ENCODE measurements at regions of chr12 and their contacts with region 1.

Region 1: GRCh38 chr12:51424662-51425438 is at the start of gene SLC4A8:
- DNase-seq: peak; percentile 75
- ATAC-seq: peak; percentile 92
- H3K4me3 Mint-ChIP-seq: peak within 1 kb of the TSS; percentile 83
- H3K27ac Mint-ChIP-seq: peak within 1 kb of the TSS; percentile 25
- H3K4me1 Mint-ChIP-seq: peaks cover 16% of the 10 kb centered on the region
- H3K27me3 Mint-ChIP-seq: no peaks in the 10 kb centered on the region
- CTCF ChIP-seq: no peak
- total RNA-seq, gene SLC4A8: 5.2 and 5.8 TPM in 2 replicates

Region 2: DNA sequence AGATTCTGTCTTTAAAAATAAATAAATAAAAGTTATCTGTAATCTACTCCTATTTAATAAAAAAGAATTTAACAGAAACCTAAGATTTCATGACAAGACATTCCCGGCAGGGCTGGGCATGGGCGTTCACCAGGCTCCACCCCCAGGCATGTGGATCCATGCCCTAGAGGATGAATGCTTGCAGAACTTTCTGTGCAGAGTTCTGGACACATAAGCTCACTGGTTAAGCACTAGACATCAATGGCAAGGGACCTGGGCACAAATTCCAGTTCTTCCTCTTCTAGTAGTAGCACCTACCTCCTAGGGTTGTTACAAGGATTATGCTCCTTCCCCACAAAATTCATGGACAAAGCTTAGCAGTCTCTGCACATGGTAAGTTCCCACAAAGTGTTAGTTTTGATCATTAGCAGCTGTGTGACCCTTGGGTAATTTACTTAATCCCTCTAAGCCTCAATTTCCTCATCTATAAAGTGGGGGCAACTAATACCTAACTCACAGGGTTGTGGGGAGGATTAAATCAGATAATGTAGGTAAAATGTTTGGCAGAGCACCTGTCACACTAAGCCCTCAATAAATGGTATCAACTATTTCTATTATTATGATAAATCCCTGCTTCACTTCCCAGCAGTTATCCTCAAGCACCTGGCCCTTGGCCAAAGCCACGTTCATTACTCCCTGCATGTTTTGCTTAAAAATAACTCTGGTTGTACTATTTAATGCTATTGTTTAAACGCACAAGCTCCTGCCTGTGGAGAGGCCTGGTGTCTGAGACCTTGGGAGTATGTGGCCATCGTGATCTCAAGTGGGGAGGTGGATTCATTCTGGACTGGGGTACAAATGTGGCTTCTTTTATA is 43.4 kb before region 1 on chr12:
- CTCF ChIA-PET with region 1: no interaction called
- POLR2A ChIA-PET with region 1: no interaction called
- intact Hi-C with region 1: no loop called
- DNase-seq: no peak
- ATAC-seq: no peak
- H3K4me3 Mint-ChIP-seq: no peak overlapping the region
- H3K27ac Mint-ChIP-seq: no peak overlapping the region
- H3K4me1 Mint-ChIP-seq: peaks cover 33% of the 10 kb centered on the region
- H3K27me3 Mint-ChIP-seq: no peaks in the 10 kb centered on the region
- CTCF ChIP-seq: no peak

Region 3: DNA sequence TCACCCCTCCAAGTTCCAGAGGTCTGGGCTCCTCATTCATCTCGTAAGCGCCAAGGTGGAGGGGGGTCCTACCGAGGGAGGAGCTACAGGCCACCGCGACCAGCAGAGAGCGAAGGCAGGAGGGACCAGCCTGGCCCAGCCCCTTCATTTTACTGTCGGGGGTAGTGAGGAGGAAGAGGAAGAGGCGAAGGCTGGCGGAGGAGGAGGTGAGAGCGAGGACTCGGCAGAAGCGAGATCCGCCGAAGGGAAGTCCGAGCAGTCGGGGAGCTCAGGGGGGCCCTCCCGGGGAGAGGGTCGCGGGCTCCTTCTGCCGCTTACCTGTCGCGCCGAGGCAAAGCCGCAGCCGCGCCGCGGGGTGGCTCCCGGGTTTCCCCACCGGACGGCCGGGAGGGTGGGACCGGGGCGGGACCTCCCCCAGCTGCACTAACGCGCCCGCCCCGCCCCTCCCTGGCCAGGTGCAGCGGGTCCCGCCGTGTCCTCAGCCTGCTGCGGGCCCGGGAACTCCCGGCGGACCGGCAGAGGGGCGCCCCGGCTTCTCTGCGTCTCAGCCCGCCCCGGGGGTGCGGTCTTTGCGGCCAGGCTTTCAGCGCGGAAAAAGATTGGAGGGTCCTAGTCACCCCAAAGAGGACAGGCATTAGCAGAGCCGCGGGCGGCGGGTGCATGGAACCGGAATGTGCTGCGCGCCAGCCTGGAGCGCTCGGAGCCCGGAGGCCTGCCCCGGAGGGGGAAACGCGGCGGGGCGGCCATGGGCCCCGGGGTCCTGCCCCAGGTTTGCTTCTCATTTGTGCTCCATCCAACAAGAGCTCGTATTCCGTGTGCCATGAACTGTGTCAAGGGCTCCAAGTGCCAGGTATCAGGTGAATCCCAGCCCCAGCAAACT is 33.3 kb before region 1 on chr12 and contains the start of gene GALNT6:
- CTCF ChIA-PET with region 1: interaction called, 5 read pairs
- POLR2A ChIA-PET with region 1: interaction called, 5 read pairs
- intact Hi-C with region 1: loop called (anchors 1 kb)
- DNase-seq: peak; percentile 80
- ATAC-seq: peak; percentile 75
- H3K4me3 Mint-ChIP-seq: peak within 1 kb of the TSS; percentile 94
- H3K27ac Mint-ChIP-seq: peak within 1 kb of the TSS; percentile 85
- H3K4me1 Mint-ChIP-seq: peaks cover 79% of the 10 kb centered on the region
- H3K27me3 Mint-ChIP-seq: no peaks in the 10 kb centered on the region
- CTCF ChIP-seq: no peak
- total RNA-seq, gene GALNT6: 23.8 and 24.4 TPM in 2 replicates

Region 4: GRCh38 chr12:51441583-51441982 is 16.7 kb after region 1 on chr12:
- CTCF ChIA-PET with region 1: no interaction called
- POLR2A ChIA-PET with region 1: no interaction called
- intact Hi-C with region 1: no loop called
- DNase-seq: no peak
- ATAC-seq: no peak
- H3K4me3 Mint-ChIP-seq: no peak overlapping the region
- H3K27ac Mint-ChIP-seq: no peak overlapping the region
- H3K4me1 Mint-ChIP-seq: no peaks in the 10 kb centered on the region
- H3K27me3 Mint-ChIP-seq: no peaks in the 10 kb centered on the region
- CTCF ChIP-seq: no peak

Region 5: GRCh38 chr12:51590347-51591019 is 165.6 kb after region 1 on chr12:
- CTCF ChIA-PET with region 1: no interaction called
- POLR2A ChIA-PET with region 1: no interaction called
- intact Hi-C with region 1: loop called (anchors 5 kb)
- DNase-seq: peak; percentile 75
- ATAC-seq: peak; percentile 88
- H3K4me3 Mint-ChIP-seq: peak overlapping the region; percentile 88
- H3K27ac Mint-ChIP-seq: peak overlapping the region; percentile 56
- H3K4me1 Mint-ChIP-seq: peaks cover 18% of the 10 kb centered on the region
- H3K27me3 Mint-ChIP-seq: peaks cover 32% of the 10 kb centered on the region
- CTCF ChIP-seq: no peak

Region 6: GRCh38 chr12:51814311-51815088 is 389.6 kb after region 1 on chr12:
- CTCF ChIA-PET with region 1: no interaction called
- POLR2A ChIA-PET with region 1: no interaction called
- intact Hi-C with region 1: loop called (anchors 2 kb)
- DNase-seq: peak; percentile 64
- ATAC-seq: peak; percentile 88
- H3K4me3 Mint-ChIP-seq: peak overlapping the region; percentile 66
- H3K27ac Mint-ChIP-seq: no peak overlapping the region
- H3K4me1 Mint-ChIP-seq: peaks cover 5% of the 10 kb centered on the region
- H3K27me3 Mint-ChIP-seq: peaks cover 42% of the 10 kb centered on the region
- CTCF ChIP-seq: no peak

Region 7: DNA sequence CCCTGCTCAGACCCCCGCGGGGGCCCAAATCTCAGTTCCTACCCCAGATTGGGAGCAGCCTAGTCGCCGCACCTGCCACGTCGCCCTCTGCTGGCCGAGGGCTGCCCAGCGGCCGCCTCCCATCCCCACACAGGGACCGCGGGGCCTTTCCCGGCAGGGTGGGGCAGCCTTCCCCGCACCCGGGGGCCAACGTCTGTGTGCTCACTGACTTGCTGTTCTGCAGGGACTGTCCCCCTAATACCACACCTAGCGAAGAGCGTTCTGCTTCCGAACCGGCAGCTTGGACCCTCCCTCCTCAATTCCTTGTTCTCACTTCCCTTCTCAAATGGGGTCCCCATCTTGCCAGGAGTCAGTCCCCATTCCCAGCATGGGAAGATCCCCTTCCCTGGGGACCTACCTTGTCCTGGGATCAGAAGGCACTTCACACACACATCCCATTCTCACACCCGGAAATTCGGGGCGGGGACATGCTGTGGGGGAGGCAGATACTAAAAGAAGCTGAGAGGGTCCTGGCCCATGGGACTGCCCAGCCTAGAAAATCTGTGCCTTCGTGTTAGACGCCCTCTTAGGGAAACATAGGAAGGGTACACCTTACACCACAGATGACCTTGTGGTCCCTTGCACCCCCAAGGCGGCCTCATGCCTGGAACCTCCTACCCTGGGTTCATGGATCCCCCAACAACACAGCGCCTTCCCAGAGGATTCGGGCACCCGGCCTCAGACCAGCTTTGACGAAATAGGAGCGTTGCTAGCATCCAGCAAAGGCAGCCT is 498.8 kb after region 1 on chr12:
- CTCF ChIA-PET with region 1: interaction called, 3 read pairs
- POLR2A ChIA-PET with region 1: no interaction called
- intact Hi-C with region 1: loop called (anchors 1 kb)
- DNase-seq: peak; percentile 44
- ATAC-seq: peak; percentile 66
- H3K4me3 Mint-ChIP-seq: no peak overlapping the region
- H3K27ac Mint-ChIP-seq: no peak overlapping the region
- H3K4me1 Mint-ChIP-seq: peaks cover 32% of the 10 kb centered on the region
- H3K27me3 Mint-ChIP-seq: no peaks in the 10 kb centered on the region
- CTCF ChIP-seq: no peak

Measured in activated B cell treated with CpG ODN at 0.5 μM for 24 hours (primary cell).